Panc1 (cell line): ENCODE measurements at regions of chr1 and their contacts with region 1.

Region 1: GRCh38 chr1:117312225-117313138 is 54.8 kb upstream of the MAN1A2 start:
- DNase-seq: peak; percentile 17
- ATAC-seq: 0 out of 2 replicates have a peak, but pooled peaks have one; percentile 62
- H3K4me3 ChIP-seq: no peak overlapping the region
- H3K27ac ChIP-seq: no peak overlapping the region
- H3K4me1 ChIP-seq: no peaks in the 10 kb centered on the region
- H3K27me3 ChIP-seq: no peaks in the 10 kb centered on the region
- CTCF ChIP-seq: peak; percentile 70

Region 2: DNA sequence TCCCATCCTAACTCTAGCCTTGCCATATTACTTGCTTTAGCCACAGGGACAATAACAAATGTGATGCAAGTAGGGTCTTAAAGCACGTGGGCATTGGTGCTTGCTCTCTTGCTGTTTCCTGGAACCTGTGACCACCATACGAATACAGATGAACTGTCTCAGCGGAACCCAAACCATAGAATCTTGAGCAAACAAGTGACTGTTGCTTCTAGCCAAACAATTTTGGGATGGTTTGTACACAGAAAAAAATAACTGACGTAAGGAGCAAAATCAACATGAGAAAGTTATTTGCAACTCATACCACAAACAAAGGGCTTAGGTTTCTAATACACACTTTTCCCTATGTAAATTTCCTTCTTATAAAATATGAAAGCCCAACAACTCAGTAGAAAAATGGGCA is 86.5 kb before region 1 on chr1:
- CTCF ChIA-PET with region 1: no interaction called
- POLR2A ChIA-PET with region 1: no interaction called
- in situ Hi-C with region 1: no loop called
- intact Hi-C with region 1: no loop called
- DNase-seq: no peak
- ATAC-seq: no peak
- H3K4me3 ChIP-seq: no peak overlapping the region
- H3K27ac ChIP-seq: no peak overlapping the region
- H3K4me1 ChIP-seq: no peaks in the 10 kb centered on the region
- H3K27me3 ChIP-seq: no peaks in the 10 kb centered on the region
- CTCF ChIP-seq: no peak

Region 3: DNA sequence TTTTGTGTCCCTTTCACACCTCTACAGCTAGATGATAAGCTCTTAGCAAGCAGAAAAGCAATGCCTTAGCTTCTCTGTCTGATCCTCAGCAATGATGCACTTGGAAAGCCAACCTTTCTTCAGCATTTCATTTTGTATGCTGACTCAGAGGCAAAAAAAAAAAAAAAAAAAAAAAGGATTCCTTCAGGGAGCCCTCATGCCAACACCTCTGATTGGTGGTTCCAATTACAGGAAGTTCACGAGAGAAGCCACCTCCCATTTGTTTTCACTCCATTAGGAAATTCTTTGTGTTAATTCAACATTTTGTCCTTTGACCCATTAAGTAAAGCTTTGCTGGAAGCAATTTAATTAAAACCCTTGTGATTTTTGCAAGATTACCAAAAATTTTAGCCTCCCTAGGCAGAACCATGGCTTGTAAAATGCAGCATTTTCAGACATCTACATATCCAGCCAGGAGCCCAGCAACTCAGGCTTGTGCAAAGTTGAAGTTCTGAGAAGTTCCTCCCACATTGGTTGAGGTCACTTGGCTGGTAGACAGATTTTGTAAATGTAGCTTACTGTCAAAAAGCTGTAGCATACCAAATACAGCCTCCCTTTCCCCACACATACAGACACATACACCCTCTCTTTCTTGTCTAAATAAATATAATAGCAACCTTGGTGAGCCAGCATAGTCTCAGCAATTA is 74.6 kb before region 1 on chr1:
- CTCF ChIA-PET with region 1: no interaction called
- POLR2A ChIA-PET with region 1: interaction called, 20 read pairs
- in situ Hi-C with region 1: no loop called
- intact Hi-C with region 1: no loop called
- DNase-seq: no peak
- ATAC-seq: no peak
- H3K4me3 ChIP-seq: no peak overlapping the region
- H3K27ac ChIP-seq: no peak overlapping the region
- H3K4me1 ChIP-seq: no peaks in the 10 kb centered on the region
- H3K27me3 ChIP-seq: no peaks in the 10 kb centered on the region
- CTCF ChIP-seq: no peak